Kidney (tissue), 22 donors: ENCODE measurements at regions of chr1 and their contacts with region 1.

Region 1: GRCh38 chr1:30801771-30802198 is 44.2 kb upstream of the LAPTM5 start:
- DNase-seq: peak; percentile 90 to 92 (median 91)
- H3K4me3 ChIP-seq: no peak overlapping the region
- H3K27ac ChIP-seq: no peak overlapping the region
- H3K4me1 ChIP-seq: peaks cover 0 to 10% (median 0%) of the 10 kb centered on the region in 3 donors
- H3K27me3 ChIP-seq: no peaks in the 10 kb centered on the region
- CTCF ChIP-seq: peak; percentile 98

Region 2: DNA sequence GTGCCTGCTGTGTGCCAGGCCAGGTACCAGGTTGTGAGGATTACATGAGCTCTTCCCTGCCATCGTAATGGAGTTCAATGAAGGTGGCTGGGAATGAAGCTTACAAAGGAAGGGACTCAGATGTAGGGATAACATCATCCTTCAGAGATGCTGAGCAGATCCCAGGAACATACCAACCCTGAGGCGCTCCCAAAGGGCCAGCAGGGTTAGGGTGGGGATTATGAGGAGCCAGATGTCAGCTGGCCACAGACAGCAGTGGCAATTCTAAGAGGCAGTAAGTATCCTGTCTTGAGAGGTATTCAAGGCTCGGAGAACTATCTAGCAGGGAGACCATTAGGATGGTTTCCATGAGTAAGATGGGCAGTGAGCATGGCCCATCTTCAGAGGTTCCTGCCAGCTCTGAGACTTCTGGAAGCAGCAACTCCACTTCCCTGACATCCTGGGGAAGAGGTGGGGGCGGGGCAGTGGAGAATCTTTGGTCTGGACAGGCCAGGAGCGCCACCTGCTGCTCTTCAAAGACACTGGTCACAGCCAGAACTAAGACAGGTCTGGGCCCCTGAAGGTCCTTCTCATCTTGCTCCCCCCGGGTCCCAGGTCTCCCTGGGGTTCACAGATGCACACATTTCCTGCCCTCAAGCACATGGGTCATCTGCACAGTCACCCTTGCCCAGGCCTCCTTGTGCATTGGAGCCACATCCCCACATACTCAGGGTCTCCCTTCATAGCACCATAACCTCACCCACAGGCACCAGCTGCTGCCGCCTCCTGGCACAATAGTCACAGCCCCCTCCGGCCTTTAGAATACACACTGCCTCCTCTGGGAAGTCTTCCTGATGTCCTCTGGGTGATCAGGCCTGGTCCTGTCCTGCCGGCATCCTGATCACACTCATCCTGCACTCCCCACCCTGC is 109.5 kb after region 1 on chr1:
- intact Hi-C with region 1: loop called (anchors 2 kb)
- DNase-seq: peak; percentile 90 to 95 (median 92)
- H3K4me3 ChIP-seq: no peak overlapping the region
- H3K27ac ChIP-seq: no peak overlapping the region
- H3K4me1 ChIP-seq: peaks cover 0 to 12% (median 0%) of the 10 kb centered on the region in 3 donors
- H3K27me3 ChIP-seq: no peaks in the 10 kb centered on the region
- CTCF ChIP-seq: peak; percentile 94